Heart left ventricle (tissue), 16 donors: ENCODE measurements at regions of chr5 and their contacts with region 1.

Region 1: GRCh38 chr5:173010547-173011464 is 27.2 kb downstream of the ATP6V0E1 start:
- DNase-seq: peak; percentile 63 to 72 (median 70)
- ATAC-seq: peak; percentile 82 to 92 (median 88)
- H3K4me3 ChIP-seq: no peak overlapping the region
- H3K27ac ChIP-seq: peak overlapping the region in 3 of 12 donors; percentile 26 to 68 (median 44)
- H3K4me1 ChIP-seq: peaks cover 0 to 90% (median 32%) of the 10 kb centered on the region in 12 donors
- H3K27me3 ChIP-seq: no peaks in the 10 kb centered on the region
- CTCF ChIP-seq: peak; percentile 43 to 75 (median 64)
- POLR2A ChIP-seq: no peak

Region 2: GRCh38 chr5:172910828-172911627 is 99.8 kb before region 1 on chr5:
- intact Hi-C with region 1: no loop called
- DNase-seq: peak; percentile 55 to 86 (median 73)
- ATAC-seq: peak; percentile 63 to 83 (median 70)
- H3K4me3 ChIP-seq: no peak overlapping the region
- H3K27ac ChIP-seq: peak overlapping the region; percentile 28 to 83 (median 62)
- H3K4me1 ChIP-seq: peaks cover 0 to 35% (median 15%) of the 10 kb centered on the region in 12 donors
- H3K27me3 ChIP-seq: no peaks in the 10 kb centered on the region
- CTCF ChIP-seq: peak in 7 of 12 donors; percentile 16 to 46 (median 25)
- POLR2A ChIP-seq: no peak

Region 3: DNA sequence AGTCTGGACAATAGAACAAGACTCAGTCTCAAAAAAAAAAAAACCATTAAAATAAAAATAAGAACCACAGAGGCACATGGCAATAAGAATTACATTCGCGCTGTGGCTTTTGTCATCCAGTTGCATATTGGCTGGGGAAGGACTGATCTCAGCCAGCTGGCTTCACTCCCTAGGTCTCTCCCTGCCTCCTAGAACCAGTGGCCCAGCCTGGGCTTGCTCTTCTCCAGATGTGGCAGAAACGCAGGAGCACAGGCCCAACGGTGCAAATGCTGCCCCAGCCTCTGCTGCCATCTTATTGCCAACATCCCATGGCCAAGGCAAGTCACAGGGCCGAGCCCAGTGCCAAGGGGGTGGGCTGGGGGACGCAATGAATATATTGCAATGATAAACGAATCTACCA is 187.2 kb after region 1 on chr5:
- intact Hi-C with region 1: loop called in 1 of 10 experiments (anchors 5 kb)
- DNase-seq: peak in 4 of 5 donors; percentile 28 to 57 (median 44)
- ATAC-seq: peak in 3 of 4 donors; percentile 60 to 65 (median 60)
- H3K4me3 ChIP-seq: no peak overlapping the region
- H3K27ac ChIP-seq: peak overlapping the region in 6 of 12 donors; percentile 49 to 68 (median 56)
- H3K4me1 ChIP-seq: peaks cover 0 to 21% (median 5%) of the 10 kb centered on the region in 12 donors
- H3K27me3 ChIP-seq: peaks cover 0 to 23% (median 0%) of the 10 kb centered on the region in 9 donors
- CTCF ChIP-seq: no peak
- POLR2A ChIP-seq: no peak